ENCODE measurements at regions of chr1 and their contacts with region 1.

Region 1: GRCh38 chr1:154062309-154062708 is 71.7 kb downstream of the RPS27 start:
- DNase-seq: no peak
- H3K4me3 ChIP-seq: no peak overlapping the region
- H3K27ac ChIP-seq: no peak overlapping the region
- H3K4me1 ChIP-seq: no peaks in the 10 kb centered on the region
- H3K27me3 ChIP-seq: no peaks in the 10 kb centered on the region
- CTCF ChIP-seq: no peak
- POLR2A ChIP-seq: no peak

Region 2: GRCh38 chr1:153194331-153195050 is 867.8 kb before region 1 on chr1:
- intact Hi-C with region 1: loop called (anchors 5 kb)
- DNase-seq: no peak
- H3K4me3 ChIP-seq: no peak overlapping the region
- H3K27ac ChIP-seq: no peak overlapping the region
- H3K4me1 ChIP-seq: no peaks in the 10 kb centered on the region
- H3K27me3 ChIP-seq: peaks cover 0 to 9% of the 10 kb centered on the region in 2 donors
- CTCF ChIP-seq: no peak
- POLR2A ChIP-seq: no peak